HCT116 (cell line): ENCODE measurements at regions of chr5 and their contacts with region 1.

Region 1: GRCh38 chr5:147369742-147370374 is 135.0 kb downstream of the STK32A start:
- DNase-seq: peak; percentile 21
- ATAC-seq: peak; percentile 60; the same call in 1 of the 2 replicates
- H3K4me3 ChIP-seq: no peak overlapping the region
- H3K27ac ChIP-seq: no peak overlapping the region
- H3K4me1 ChIP-seq: no peaks in the 10 kb centered on the region
- H3K27me3 ChIP-seq: no peaks in the 10 kb centered on the region
- CTCF ChIP-seq: peak; percentile 44 to 74 (median 70); a peak in 5 of 6 replicates
- POLR2A ChIP-seq: no peak
- RAD21 ChIP-seq: peak; percentile 86

Region 2: GRCh38 chr5:146533260-146533857 is 836.5 kb before region 1 on chr5:
- CTCF ChIA-PET with region 1: interaction called, 16 read pairs
- POLR2A ChIA-PET with region 1: no interaction called
- RAD21 ChIA-PET with region 1: interaction called in 1 of 2 experiments, 4 read pairs
- intact Hi-C with region 1: no loop called
- DNase-seq: peak; percentile 73
- ATAC-seq: peak; percentile 97
- H3K4me3 ChIP-seq: no peak overlapping the region
- H3K27ac ChIP-seq: no peak overlapping the region
- H3K4me1 ChIP-seq: peaks cover 0 to 3% of the 10 kb centered on the region in 2 experiments; a peak in 2 of 4 replicates
- H3K27me3 ChIP-seq: no peaks in the 10 kb centered on the region
- CTCF ChIP-seq: peak; percentile 70 to 88 (median 77)
- POLR2A ChIP-seq: no peak
- RAD21 ChIP-seq: peak; percentile 91

Region 3: DNA sequence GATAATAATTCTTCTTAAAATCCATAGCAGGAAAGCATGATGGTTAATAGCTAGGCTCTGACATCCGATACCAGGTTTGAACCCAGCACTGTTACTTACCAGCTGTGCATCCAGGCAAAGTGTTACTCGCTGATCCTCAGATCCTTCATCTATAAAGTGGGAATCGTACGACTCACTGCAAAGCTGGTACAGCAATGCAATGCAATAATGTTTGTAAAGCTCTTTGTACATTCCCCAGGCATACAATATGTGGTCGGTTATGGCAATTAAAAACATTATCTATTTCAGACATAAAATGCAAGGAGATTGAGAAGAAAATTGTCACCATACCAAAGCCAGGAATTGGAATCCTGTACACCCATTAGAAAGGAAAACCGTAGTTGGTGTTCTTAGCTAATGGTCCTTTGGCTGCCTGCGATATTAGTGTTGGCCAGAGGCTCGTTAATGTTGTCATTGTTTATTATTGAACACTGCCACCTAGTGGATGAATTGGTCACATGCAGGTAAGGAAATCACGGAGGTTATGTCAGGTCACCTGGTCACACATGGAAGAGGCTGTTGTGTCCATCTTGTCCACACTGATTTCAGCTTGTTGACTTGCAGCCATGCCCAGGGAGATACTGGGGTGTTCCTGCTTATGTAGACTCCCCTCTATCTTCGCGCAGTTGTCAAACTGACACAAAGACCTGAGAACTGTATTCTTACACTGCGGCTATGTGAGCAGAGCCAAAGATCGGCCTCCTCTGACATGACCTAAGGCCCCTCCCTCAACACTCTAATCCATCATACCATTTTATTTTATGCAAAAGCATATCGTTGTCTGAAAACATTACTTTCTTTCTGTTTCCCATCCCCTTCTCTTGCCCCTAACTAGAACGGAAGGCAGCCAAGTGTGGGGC is 403.8 kb before region 1 on chr5:
- CTCF ChIA-PET with region 1: interaction called, 17 read pairs
- POLR2A ChIA-PET with region 1: no interaction called
- RAD21 ChIA-PET with region 1: no interaction called
- intact Hi-C with region 1: loop called (anchors 10 kb)
- DNase-seq: peak; percentile 74
- ATAC-seq: peak; percentile 98
- H3K4me3 ChIP-seq: no peak overlapping the region
- H3K27ac ChIP-seq: no peak overlapping the region
- H3K4me1 ChIP-seq: peaks cover 0 to 8% of the 10 kb centered on the region in 2 experiments; a peak in 1 of 4 replicates
- H3K27me3 ChIP-seq: no peaks in the 10 kb centered on the region
- CTCF ChIP-seq: peak; percentile 68 to 91 (median 81)
- POLR2A ChIP-seq: no peak
- RAD21 ChIP-seq: peak; percentile 95

Region 4: GRCh38 chr5:147188200-147189108 is 181.4 kb before region 1 on chr5:
- CTCF ChIA-PET with region 1: interaction called, 41 read pairs
- POLR2A ChIA-PET with region 1: no interaction called
- RAD21 ChIA-PET with region 1: interaction called, 5 read pairs
- intact Hi-C with region 1: no loop called
- DNase-seq: peak; percentile 42
- ATAC-seq: peak; percentile 93
- H3K4me3 ChIP-seq: no peak overlapping the region
- H3K27ac ChIP-seq: no peak overlapping the region
- H3K4me1 ChIP-seq: no peaks in the 10 kb centered on the region
- H3K27me3 ChIP-seq: peaks cover 3% of the 10 kb centered on the region; the same call in 1 of the 2 replicates
- CTCF ChIP-seq: peak; percentile 65 to 88 (median 71)
- POLR2A ChIP-seq: no peak
- RAD21 ChIP-seq: peak; percentile 84

Region 5: DNA sequence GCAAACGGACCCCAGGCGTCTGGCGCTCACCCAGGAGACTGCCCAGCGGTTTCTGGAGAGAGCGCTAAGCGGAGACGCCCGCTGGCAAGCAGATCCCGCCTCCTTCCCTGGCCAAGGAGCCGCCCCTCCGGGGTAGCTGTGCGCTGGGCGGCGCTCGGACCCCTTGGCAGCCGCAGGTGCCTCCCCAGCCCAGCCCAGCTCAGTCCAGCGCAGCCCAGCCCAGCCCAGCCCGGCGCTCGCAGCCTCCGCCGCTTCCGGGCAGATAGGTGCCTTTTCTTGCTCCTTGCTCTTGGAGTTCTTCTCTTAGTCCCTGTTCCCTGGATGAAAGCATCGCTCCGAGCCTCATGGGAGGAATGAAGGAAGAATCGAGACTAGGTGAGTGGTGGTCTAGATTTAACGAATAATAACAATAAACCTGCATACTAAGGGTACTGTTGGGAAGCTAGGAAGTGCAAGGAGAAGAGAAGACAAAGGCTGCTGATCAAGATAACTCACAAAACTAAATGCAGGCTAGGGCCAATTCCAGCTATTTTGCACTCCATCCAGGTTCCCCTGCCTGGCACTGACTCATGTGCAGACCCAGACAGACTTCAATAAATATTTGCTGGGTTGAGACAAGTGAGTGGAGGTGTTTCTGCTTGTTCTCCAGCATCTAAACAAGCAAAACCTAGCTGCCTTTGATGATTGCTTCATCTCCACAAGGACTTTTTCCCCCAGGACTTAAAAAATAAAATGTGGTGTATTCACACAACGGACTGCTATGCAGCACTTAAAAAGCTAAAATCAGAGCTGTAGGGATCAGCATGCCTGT is 134.8 kb before region 1 on chr5 and contains the start of gene STK32A:
- CTCF ChIA-PET with region 1: interaction called, 10 read pairs
- POLR2A ChIA-PET with region 1: no interaction called
- RAD21 ChIA-PET with region 1: no interaction called
- intact Hi-C with region 1: no loop called
- DNase-seq: no peak
- ATAC-seq: peak; percentile 90
- H3K4me3 ChIP-seq: peak within 1 kb of the TSS in 1 of 2 experiments; percentile 19; a peak in 1 of 4 replicates
- H3K27ac ChIP-seq: no peak within 1 kb of the TSS
- H3K4me1 ChIP-seq: no peaks in the 10 kb centered on the region
- H3K27me3 ChIP-seq: peaks cover 12% of the 10 kb centered on the region
- CTCF ChIP-seq: no peak
- POLR2A ChIP-seq: no peak
- RAD21 ChIP-seq: no peak
- total RNA-seq, gene STK32A: 1.2 TPM

Region 6: DNA sequence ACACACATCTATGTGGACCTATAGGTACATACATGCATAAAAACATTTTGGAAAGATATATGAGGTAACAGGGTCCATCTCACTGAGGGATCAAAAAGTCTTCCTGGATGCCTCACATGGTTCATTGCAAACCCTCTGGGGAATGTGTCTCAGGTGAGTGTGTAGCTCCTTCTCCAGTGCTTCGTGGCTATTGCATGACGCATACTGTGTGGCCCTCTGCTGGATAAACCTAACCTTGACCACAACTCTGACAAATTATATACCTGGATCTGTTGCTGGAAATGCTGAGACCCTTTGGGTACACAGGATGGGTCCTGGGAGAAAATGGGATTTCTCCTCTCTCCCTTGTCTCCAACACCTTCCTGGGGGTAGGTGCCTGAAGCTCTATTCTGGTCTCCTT is 320.7 kb after region 1 on chr5:
- CTCF ChIA-PET with region 1: no interaction called
- POLR2A ChIA-PET with region 1: no interaction called
- RAD21 ChIA-PET with region 1: no interaction called
- intact Hi-C with region 1: no loop called
- DNase-seq: peak; percentile 31
- ATAC-seq: peak; percentile 88
- H3K4me3 ChIP-seq: no peak overlapping the region
- H3K27ac ChIP-seq: no peak overlapping the region
- H3K4me1 ChIP-seq: no peaks in the 10 kb centered on the region
- H3K27me3 ChIP-seq: peaks cover 11% of the 10 kb centered on the region; the same call in 1 of the 2 replicates
- CTCF ChIP-seq: peak; percentile 18 to 53 (median 50); a peak in 4 of 6 replicates
- POLR2A ChIP-seq: no peak
- RAD21 ChIP-seq: peak; percentile 45